ENCODE measurements at regions of chr21 and their contacts with region 1.

Region 1: DNA sequence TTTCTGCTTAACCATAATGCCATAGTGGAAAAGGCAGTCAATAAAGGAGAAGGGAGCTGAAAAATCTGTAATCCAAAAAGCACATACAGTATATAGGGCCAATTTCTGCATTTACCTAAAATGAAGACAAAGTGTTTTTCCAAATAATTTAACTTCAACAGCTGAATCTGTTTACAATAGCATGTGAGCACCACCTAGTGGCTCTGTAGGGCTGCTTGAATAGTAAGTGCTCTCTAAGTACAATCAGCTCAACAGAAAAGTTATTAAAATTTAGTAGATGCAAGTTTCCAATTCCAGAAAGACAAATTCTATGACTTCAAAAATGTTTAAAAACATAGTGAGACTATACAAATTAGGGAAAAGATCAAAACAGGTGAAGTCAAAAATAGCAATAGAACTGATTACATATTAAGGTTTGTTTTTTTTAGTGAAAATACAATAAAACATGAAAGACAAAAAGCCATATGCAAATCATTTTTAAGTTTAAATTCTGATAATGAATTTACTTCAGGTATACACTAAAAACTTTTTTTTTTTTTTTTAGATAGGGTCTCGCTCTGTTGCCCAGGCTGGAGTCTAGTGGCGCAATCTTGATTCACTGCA is 220.0 kb downstream of the SETD4 start:
- DNase-seq: peak; percentile 50 to 68 (median 61)
- H3K4me3 ChIP-seq: no peak overlapping the region
- H3K4me3 Mint-ChIP-seq: no peak overlapping the region
- H3K27ac ChIP-seq: no peak overlapping the region
- H3K27ac Mint-ChIP-seq: no peak overlapping the region
- H3K4me1 ChIP-seq: no peaks in the 10 kb centered on the region
- H3K4me1 Mint-ChIP-seq: no peaks in the 10 kb centered on the region
- H3K27me3 ChIP-seq: no peaks in the 10 kb centered on the region
- H3K27me3 Mint-ChIP-seq: peaks cover 1 to 3% (median 2%) of the 10 kb centered on the region in 3 donors
- CTCF ChIP-seq: peak; percentile 83

Region 2: DNA sequence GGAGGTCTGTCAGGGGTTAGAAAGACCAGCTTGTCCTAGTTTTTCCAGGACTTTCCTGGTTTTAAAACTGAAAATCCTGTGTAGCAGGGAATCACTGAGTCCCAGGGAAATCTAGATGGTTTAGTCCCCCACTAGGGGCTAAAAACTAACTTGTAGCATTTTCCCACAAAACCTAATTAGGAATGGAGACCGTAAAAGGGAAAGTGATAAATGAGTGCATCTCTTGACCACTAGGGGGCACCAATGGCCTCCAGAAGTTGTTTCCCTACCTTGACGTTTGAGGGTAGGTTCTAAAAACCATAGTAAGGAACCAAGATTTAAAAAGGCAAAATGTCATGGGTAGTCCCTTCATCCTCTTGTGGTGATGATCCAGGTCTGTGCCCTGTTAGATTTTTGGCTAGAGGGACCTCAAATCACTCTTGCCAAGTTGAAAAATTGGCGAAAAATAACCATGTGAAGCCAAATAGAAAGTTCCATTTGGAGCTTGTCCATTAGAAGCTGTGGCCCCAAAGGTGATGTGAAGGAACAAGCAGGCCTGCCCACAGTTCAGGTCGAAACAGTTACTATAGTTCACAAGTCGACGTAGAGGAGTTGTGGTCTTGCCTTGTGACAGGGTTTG is 1147.0 kb before region 1 on chr21:
- intact Hi-C with region 1: loop called in 1 of 2 experiments (anchors 5 kb)
- DNase-seq: peak; percentile 34 to 57 (median 55)
- H3K4me3 ChIP-seq: no peak overlapping the region
- H3K4me3 Mint-ChIP-seq: no peak overlapping the region
- H3K27ac ChIP-seq: no peak overlapping the region
- H3K27ac Mint-ChIP-seq: no peak overlapping the region
- H3K4me1 ChIP-seq: no peaks in the 10 kb centered on the region
- H3K4me1 Mint-ChIP-seq: no peaks in the 10 kb centered on the region
- H3K27me3 ChIP-seq: peaks cover 3 to 6% of the 10 kb centered on the region in 2 donors
- H3K27me3 Mint-ChIP-seq: peaks cover 5 to 12% (median 10%) of the 10 kb centered on the region in 3 donors
- CTCF ChIP-seq: peak; percentile 94

Region 3: DNA sequence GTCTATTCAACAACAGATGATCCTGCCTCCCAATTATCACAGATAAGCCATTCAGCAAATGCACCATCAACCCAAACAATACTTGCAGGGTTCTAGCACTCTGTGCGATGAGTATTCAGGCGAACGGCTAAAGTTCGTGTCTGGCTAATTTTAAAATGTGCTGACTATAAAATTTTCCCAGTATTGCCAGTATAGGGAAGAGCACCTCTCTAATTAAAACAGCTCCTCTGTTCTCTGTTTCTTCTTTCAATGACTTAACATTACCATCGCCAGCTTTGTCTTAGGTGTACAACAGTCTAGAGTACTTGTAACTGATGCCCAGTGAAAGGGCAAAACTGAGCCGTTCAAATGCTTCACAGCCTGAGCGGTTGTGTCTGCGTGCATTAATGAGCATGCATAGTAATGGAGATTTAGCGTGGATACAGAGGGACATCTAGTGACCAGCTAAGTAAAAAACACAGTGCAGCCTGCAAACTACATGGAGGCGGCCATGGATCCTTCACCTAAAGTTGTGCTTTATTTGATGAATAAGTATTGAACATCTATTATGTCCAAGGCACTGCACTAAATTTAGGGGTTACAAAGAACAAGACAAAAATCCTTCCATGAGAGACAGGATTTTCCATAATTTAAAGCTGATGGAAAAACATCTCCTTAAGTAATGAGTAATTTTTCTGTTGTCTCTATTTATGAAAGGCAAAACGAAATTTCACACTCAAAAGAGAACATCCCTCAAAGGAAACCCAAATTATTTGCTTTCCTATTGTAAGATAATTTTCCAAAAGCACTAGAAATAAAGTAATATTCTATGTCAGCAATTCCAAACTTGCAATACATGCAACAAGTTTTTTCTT is 100.0 kb after region 1 on chr21:
- intact Hi-C with region 1: loop called (anchors 10 kb)
- DNase-seq: peak; percentile 59 to 74 (median 67)
- H3K4me3 ChIP-seq: no peak overlapping the region
- H3K4me3 Mint-ChIP-seq: peak overlapping the region in 1 of 2 donors; percentile 57
- H3K27ac ChIP-seq: no peak overlapping the region
- H3K27ac Mint-ChIP-seq: no peak overlapping the region
- H3K4me1 ChIP-seq: peaks cover 0 to 3% of the 10 kb centered on the region in 2 donors
- H3K4me1 Mint-ChIP-seq: peaks cover 6% of the 10 kb centered on the region
- H3K27me3 ChIP-seq: no peaks in the 10 kb centered on the region
- H3K27me3 Mint-ChIP-seq: no peaks in the 10 kb centered on the region
- CTCF ChIP-seq: peak; percentile 73

Region 4: GRCh38 chr21:36028127-36029069 is 188.1 kb after region 1 on chr21:
- intact Hi-C with region 1: loop called in 1 of 2 experiments (anchors 10 kb)
- DNase-seq: peak; percentile 49 to 66 (median 52)
- H3K4me3 ChIP-seq: no peak overlapping the region
- H3K4me3 Mint-ChIP-seq: no peak overlapping the region
- H3K27ac ChIP-seq: no peak overlapping the region
- H3K27ac Mint-ChIP-seq: peak overlapping the region in 2 of 7 donors; percentile 10 to 12
- H3K4me1 ChIP-seq: no peaks in the 10 kb centered on the region
- H3K4me1 Mint-ChIP-seq: peaks cover 5% of the 10 kb centered on the region
- H3K27me3 ChIP-seq: no peaks in the 10 kb centered on the region
- H3K27me3 Mint-ChIP-seq: peaks cover 0 to 7% (median 7%) of the 10 kb centered on the region in 3 donors
- CTCF ChIP-seq: peak; percentile 92

Measured in CD14-positive monocyte (primary cell).